ENCODE measurements at regions of chr1 and their contacts with region 1.

Region 1: DNA sequence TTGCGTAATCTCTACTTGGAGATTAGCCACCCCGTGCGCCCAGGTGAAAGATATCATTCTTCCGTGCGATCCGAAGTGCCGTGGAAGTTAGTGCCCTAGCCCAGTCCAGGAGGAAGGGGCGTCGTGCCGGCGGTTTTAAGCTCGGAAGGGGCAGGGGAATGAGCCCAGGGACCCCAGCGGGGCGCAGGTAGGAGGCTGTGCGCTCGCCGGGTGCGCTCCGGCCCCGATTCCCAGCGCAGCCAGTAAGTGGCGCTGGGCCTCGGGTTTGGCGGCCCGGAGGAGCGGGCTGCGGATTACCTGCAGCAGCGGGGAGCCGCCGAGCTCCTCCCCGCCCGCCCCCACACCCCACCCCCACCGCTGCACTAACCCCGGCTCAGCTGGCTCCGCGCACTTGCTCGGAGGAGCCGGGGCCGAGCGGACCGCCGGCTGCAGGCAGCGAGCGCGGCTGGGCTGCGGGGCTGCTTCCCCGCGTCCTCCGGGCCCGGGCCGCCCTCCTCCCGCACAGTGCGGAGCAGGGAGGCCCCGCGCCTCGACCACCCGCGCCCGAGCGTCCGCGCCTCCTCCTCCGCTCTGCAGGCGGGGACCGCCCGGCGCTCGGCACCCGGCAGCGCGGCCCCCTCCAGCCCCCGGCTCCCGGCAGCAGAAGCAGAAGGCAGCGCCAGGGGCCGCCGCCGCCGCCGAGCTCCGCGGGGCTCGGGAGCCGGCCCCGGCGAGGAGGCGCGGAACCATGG is at the start of gene RYR2:
- DNase-seq: peak; percentile 54
- ATAC-seq: peak; percentile 74 to 76
- total RNA-seq, gene RYR2: 433 to 446 TPM

Region 2: GRCh38 chr1:236997882-236998281 is 44.1 kb before region 1 on chr1:
- intact Hi-C with region 1: loop called in 1 of 2 experiments (anchors 10 kb)
- DNase-seq: peak; percentile 55
- ATAC-seq: peak; percentile 82 to 90